Heart right ventricle (tissue), 16 donors: ENCODE measurements at regions of chr3 and their contacts with region 1.

Region 1: DNA sequence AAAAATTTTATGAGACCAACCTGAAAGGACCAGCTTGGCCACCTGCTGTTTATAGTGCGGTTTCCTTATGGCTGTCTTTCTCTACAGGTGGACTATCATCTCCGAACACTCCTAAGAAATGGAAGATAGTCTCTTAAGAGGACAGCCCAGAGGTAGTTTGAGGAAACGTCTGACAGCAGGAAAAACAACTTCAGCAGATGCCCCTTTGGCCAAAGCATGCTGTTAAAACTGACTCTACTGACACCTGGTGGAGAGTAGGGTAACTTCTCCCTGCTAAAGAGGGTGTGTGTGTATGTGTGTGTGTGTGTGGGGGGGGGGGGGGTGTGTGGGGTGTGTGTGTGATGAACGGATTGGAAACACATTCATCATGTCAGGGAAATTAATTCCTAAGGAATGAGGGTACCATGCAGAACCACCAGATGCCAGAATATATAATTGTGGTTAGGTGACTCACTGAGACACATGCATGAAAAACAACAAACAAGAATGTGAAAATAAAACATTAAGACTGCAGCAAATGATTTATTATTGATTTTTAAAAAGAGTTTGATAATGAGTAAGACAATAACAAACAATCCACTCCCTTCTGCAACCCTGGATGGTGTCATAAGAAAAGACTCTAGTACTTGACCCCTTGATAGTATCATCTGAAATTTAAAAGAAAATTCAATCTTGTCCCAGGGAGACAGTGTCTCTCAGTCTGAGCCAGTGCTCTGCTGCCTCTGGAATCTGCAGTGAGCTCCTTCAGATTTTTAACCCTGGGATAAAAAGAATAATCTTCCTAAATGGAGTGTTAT is 256.5 kb downstream of the THRB start:
- DNase-seq: peak in 1 of 2 donors; percentile 67
- ATAC-seq: peak; percentile 68 to 82 (median 76)
- H3K4me3 ChIP-seq: no peak overlapping the region
- H3K27ac ChIP-seq: peak overlapping the region in 4 of 10 donors; percentile 1 to 28 (median 16)
- H3K4me1 ChIP-seq: peaks cover 0 to 32% (median 13%) of the 10 kb centered on the region in 9 donors
- H3K27me3 ChIP-seq: no peaks in the 10 kb centered on the region
- CTCF ChIP-seq: peak in 8 of 9 donors; percentile 33 to 66 (median 59)

Region 2: GRCh38 chr3:23888617-23889228 is 349.4 kb before region 1 on chr3:
- intact Hi-C with region 1: loop called in 4 of 10 experiments (anchors 5 to 10 kb)
- DNase-seq: no peak
- ATAC-seq: peak in 3 of 8 donors; percentile 27 to 44 (median 39)
- H3K4me3 ChIP-seq: no peak overlapping the region
- H3K27ac ChIP-seq: no peak overlapping the region
- H3K4me1 ChIP-seq: peaks cover 0 to 25% (median 14%) of the 10 kb centered on the region in 9 donors
- H3K27me3 ChIP-seq: no peaks in the 10 kb centered on the region
- CTCF ChIP-seq: peak; percentile 65 to 89 (median 83)

Region 3: DNA sequence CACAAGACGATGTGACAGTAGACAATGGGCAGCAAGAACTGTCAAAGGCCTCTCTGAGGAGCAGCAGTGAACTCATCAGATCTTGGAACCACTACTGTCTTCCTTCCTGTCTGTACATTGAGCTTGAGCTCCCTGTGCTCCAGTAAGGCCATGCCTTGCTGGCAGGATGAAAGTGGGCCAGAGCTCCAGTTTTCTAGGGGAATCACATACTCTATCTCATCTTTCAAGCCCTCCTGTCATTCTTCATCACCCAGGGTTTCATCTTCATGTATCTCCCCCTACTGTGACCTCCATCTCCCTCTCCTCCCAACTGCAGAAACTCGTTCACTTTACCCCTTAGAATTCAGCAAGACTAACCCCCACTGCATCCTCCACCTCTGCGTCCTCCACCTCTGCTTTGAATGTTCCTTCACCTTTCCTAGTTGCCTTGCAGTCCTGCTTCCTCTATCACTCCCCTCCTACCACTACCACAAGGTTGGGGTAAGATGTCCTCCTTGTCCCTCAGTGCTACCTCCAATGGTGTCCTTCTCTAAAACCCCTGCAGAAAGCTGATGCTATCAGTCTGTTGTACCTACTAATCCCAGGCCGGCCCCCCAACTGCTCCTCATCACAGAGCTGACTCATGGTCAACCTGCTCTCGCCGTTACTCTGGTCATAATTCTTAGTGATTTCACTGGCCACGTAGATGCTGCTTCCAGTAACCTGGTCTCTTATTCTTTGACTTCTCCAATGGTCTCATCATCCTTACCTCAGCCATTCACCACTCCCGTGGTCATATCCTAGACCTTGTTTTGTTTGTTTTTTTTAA is 343.7 kb before region 1 on chr3:
- intact Hi-C with region 1: loop called in 4 of 10 experiments (anchors 5 to 10 kb)
- DNase-seq: no peak
- ATAC-seq: peak in 1 of 8 donors; percentile 10
- H3K4me3 ChIP-seq: no peak overlapping the region
- H3K27ac ChIP-seq: no peak overlapping the region
- H3K4me1 ChIP-seq: peaks cover 0 to 6% (median 0%) of the 10 kb centered on the region in 9 donors
- H3K27me3 ChIP-seq: no peaks in the 10 kb centered on the region
- CTCF ChIP-seq: no peak

Region 4: GRCh38 chr3:24004171-24004938 is 233.8 kb before region 1 on chr3:
- intact Hi-C with region 1: loop called (anchors 1 to 5 kb)
- DNase-seq: no peak
- ATAC-seq: no peak
- H3K4me3 ChIP-seq: no peak overlapping the region
- H3K27ac ChIP-seq: no peak overlapping the region
- H3K4me1 ChIP-seq: peaks cover 0 to 3% (median 0%) of the 10 kb centered on the region in 9 donors
- H3K27me3 ChIP-seq: no peaks in the 10 kb centered on the region
- CTCF ChIP-seq: no peak

Region 5: DNA sequence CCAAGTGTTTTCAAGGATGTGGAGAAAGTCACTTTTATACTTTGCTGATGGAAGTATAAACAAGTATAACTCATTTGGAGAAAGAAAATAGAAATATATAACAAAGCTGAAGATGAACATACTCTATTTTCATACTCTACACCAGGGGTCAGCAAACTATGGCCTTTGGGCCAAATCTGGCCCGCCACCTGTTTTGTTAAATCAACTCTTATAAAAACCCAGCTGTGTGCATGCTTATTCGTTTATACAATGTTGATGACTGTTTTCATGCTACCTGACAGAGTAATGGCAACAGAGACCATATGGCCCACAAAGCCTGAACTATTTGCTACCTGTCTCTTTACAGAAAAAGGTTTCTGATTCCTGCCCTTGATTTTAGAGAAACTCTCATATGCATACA is 169.1 kb before region 1 on chr3:
- intact Hi-C with region 1: loop called in 6 of 10 experiments (anchors 1 to 10 kb)
- DNase-seq: no peak
- ATAC-seq: peak in 1 of 8 donors; percentile 37
- H3K4me3 ChIP-seq: no peak overlapping the region
- H3K27ac ChIP-seq: no peak overlapping the region
- H3K4me1 ChIP-seq: no peaks in the 10 kb centered on the region
- H3K27me3 ChIP-seq: no peaks in the 10 kb centered on the region
- CTCF ChIP-seq: peak in 6 of 9 donors; percentile 30 to 59 (median 48)

Region 6: GRCh38 chr3:24185738-24186384 is 52.3 kb before region 1 on chr3:
- intact Hi-C with region 1: loop called in 3 of 10 experiments (anchors 5 kb)
- DNase-seq: peak in 1 of 2 donors; percentile 42
- ATAC-seq: peak; percentile 42 to 92 (median 76)
- H3K4me3 ChIP-seq: no peak overlapping the region
- H3K27ac ChIP-seq: peak overlapping the region in 2 of 10 donors; percentile 2 to 36
- H3K4me1 ChIP-seq: peaks cover 0 to 22% (median 0%) of the 10 kb centered on the region in 9 donors
- H3K27me3 ChIP-seq: no peaks in the 10 kb centered on the region
- CTCF ChIP-seq: peak; percentile 23 to 74 (median 59)

Region 7: GRCh38 chr3:24377218-24377993 is 139.2 kb after region 1 on chr3:
- intact Hi-C with region 1: no loop called
- DNase-seq: no peak
- ATAC-seq: peak in 1 of 8 donors; percentile 74
- H3K4me3 ChIP-seq: no peak overlapping the region
- H3K27ac ChIP-seq: no peak overlapping the region
- H3K4me1 ChIP-seq: peaks cover 0 to 58% (median 28%) of the 10 kb centered on the region in 9 donors
- H3K27me3 ChIP-seq: no peaks in the 10 kb centered on the region
- CTCF ChIP-seq: no peak